GM12878 (cell line): ENCODE measurements at regions of chr19 and their contacts with region 1.

Region 1: GRCh38 chr19:46840136-46840942 is 10.3 kb downstream of the AP2S1 start:
- DNase-seq: no peak
- ATAC-seq: peak; percentile 87
- H3K4me3 ChIP-seq: no peak overlapping the region
- H3K27ac ChIP-seq: no peak overlapping the region
- H3K4me1 ChIP-seq: no peaks in the 10 kb centered on the region
- H3K27me3 ChIP-seq: no peaks in the 10 kb centered on the region
- CTCF ChIP-seq: peak; percentile 79 to 88 (median 80)
- EP300 ChIP-seq: no peak
- POLR2A ChIP-seq: no peak
- RAD21 ChIP-seq: peak; percentile 93

Region 2: GRCh38 chr19:46721645-46722371 is 118.5 kb before region 1 on chr19:
- CTCF ChIA-PET with region 1: no interaction called
- POLR2A ChIA-PET with region 1: no interaction called
- RAD21 ChIA-PET with region 1: no interaction called
- SMC1A ChIA-PET with region 1: no interaction called
- in situ Hi-C with region 1: no loop called
- intact Hi-C with region 1: no loop called
- DNase-seq: no peak
- ATAC-seq: no peak
- H3K4me3 ChIP-seq: no peak overlapping the region
- H3K27ac ChIP-seq: no peak overlapping the region
- H3K4me1 ChIP-seq: peaks cover 30% of the 10 kb centered on the region
- H3K27me3 ChIP-seq: no peaks in the 10 kb centered on the region
- CTCF ChIP-seq: no peak
- EP300 ChIP-seq: no peak
- POLR2A ChIP-seq: peak; percentile 48; the same call in 1 of the 2 replicates
- RAD21 ChIP-seq: no peak

Region 3: GRCh38 chr19:46746281-46747013 is 93.9 kb before region 1 on chr19 and contains the start of gene STRN4:
- CTCF ChIA-PET with region 1: interaction called, 134 read pairs
- POLR2A ChIA-PET with region 1: interaction called, 3 read pairs
- RAD21 ChIA-PET with region 1: interaction called, 17 read pairs
- SMC1A ChIA-PET with region 1: interaction called, 11 read pairs
- in situ Hi-C with region 1: loop called (anchors 5 kb)
- intact Hi-C with region 1: no loop called
- DNase-seq: no peak
- ATAC-seq: peak; percentile 49
- H3K4me3 ChIP-seq: peak within 1 kb of the TSS; percentile 100
- H3K27ac ChIP-seq: peak within 1 kb of the TSS; percentile 83
- H3K4me1 ChIP-seq: peaks cover 17% of the 10 kb centered on the region
- H3K27me3 ChIP-seq: no peaks in the 10 kb centered on the region
- CTCF ChIP-seq: no peak
- EP300 ChIP-seq: no peak
- POLR2A ChIP-seq: peak; percentile 66
- RAD21 ChIP-seq: no peak
- polyA plus RNA-seq, gene STRN4: 0.42 to 1.6 TPM

Region 4: DNA sequence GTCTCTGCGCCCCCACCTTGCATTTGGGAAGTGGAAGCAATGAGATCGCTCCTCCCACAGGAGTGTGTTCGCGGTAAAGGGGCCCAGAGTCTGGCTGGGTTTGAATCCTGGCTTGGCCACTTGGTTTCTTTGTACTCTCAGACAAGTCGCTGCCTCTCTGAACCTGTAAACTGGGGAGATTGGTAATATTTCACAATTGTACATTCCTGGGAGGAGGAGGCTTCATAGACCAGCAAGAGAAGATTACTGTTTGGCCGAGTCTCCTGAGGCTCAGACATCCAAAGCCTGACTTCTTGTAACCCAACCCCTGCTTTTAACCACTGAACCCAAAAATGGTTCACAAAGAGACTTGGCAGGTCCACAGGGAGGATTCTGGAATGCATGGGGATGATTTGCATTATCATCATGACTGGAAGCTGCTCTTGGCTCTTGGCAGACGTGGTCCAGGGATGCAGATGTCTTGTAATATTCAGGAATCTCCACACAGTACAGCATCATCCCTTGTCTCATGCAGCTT is 80.5 kb before region 1 on chr19:
- CTCF ChIA-PET with region 1: interaction called, 134 read pairs
- POLR2A ChIA-PET with region 1: no interaction called
- RAD21 ChIA-PET with region 1: interaction called, 41 read pairs
- SMC1A ChIA-PET with region 1: interaction called, 24 read pairs
- in situ Hi-C with region 1: no loop called
- intact Hi-C with region 1: loop called (anchors 1 kb)
- DNase-seq: no peak
- ATAC-seq: no peak
- H3K4me3 ChIP-seq: no peak overlapping the region
- H3K27ac ChIP-seq: no peak overlapping the region
- H3K4me1 ChIP-seq: no peaks in the 10 kb centered on the region
- H3K27me3 ChIP-seq: no peaks in the 10 kb centered on the region
- CTCF ChIP-seq: no peak
- EP300 ChIP-seq: no peak
- POLR2A ChIP-seq: no peak
- RAD21 ChIP-seq: no peak

Region 5: GRCh38 chr19:46788262-46788967 is 51.9 kb before region 1 on chr19 and contains the start of gene SLC1A5:
- CTCF ChIA-PET with region 1: interaction called, 25 read pairs
- POLR2A ChIA-PET with region 1: no interaction called
- RAD21 ChIA-PET with region 1: interaction called, 8 read pairs
- SMC1A ChIA-PET with region 1: interaction called, 11 read pairs
- in situ Hi-C with region 1: no loop called
- intact Hi-C with region 1: no loop called
- DNase-seq: peak; percentile 86
- ATAC-seq: peak; percentile 81
- H3K4me3 ChIP-seq: peak within 1 kb of the TSS; percentile 100
- H3K27ac ChIP-seq: peak within 1 kb of the TSS; percentile 94
- H3K4me1 ChIP-seq: 0 out of 2 replicates have a peak, but pooled peaks cover 7% of the 10 kb centered on the region
- H3K27me3 ChIP-seq: no peaks in the 10 kb centered on the region; a peak in 1 of 4 replicates
- CTCF ChIP-seq: no peak
- EP300 ChIP-seq: no peak
- POLR2A ChIP-seq: peak; percentile 100
- RAD21 ChIP-seq: no peak
- polyA plus RNA-seq, gene SLC1A5: 9.1 to 16.3 TPM

Region 6: GRCh38 chr19:46828484-46828883 is 11.9 kb before region 1 on chr19:
- CTCF ChIA-PET with region 1: interaction called, 17 read pairs
- POLR2A ChIA-PET with region 1: interaction called, 7 read pairs
- RAD21 ChIA-PET with region 1: interaction called, 14 read pairs
- SMC1A ChIA-PET with region 1: interaction called, 11 read pairs
- in situ Hi-C with region 1: no loop called
- intact Hi-C with region 1: no loop called
- DNase-seq: no peak
- ATAC-seq: no peak
- H3K4me3 ChIP-seq: no peak overlapping the region
- H3K27ac ChIP-seq: no peak overlapping the region
- H3K4me1 ChIP-seq: peaks cover 12% of the 10 kb centered on the region
- H3K27me3 ChIP-seq: no peaks in the 10 kb centered on the region
- CTCF ChIP-seq: no peak
- EP300 ChIP-seq: no peak
- POLR2A ChIP-seq: no peak
- RAD21 ChIP-seq: no peak

Region 7: GRCh38 chr19:46935066-46935663 is 94.8 kb after region 1 on chr19:
- CTCF ChIA-PET with region 1: no interaction called
- POLR2A ChIA-PET with region 1: no interaction called
- RAD21 ChIA-PET with region 1: no interaction called
- SMC1A ChIA-PET with region 1: no interaction called
- in situ Hi-C with region 1: no loop called
- intact Hi-C with region 1: no loop called
- DNase-seq: no peak
- ATAC-seq: no peak
- H3K4me3 ChIP-seq: no peak overlapping the region
- H3K27ac ChIP-seq: 0 out of 2 replicates have a peak overlapping the region, but pooled peaks have one; percentile 37
- H3K4me1 ChIP-seq: peaks cover 3% of the 10 kb centered on the region; the same call in 1 of the 2 replicates
- H3K27me3 ChIP-seq: no peaks in the 10 kb centered on the region
- CTCF ChIP-seq: no peak
- EP300 ChIP-seq: no peak
- POLR2A ChIP-seq: no peak
- RAD21 ChIP-seq: no peak